Mammary epithelial cell (primary cell): ENCODE measurements at regions of chr1 and their contacts with region 1.

Region 1: GRCh38 chr1:100750005-100750885 is 30.7 kb downstream of the VCAM1 start:
- DNase-seq: no peak
- H3K4me3 ChIP-seq: no peak overlapping the region
- H3K27ac ChIP-seq: no peak overlapping the region
- H3K4me1 ChIP-seq: no peaks in the 10 kb centered on the region
- H3K27me3 ChIP-seq: no peaks in the 10 kb centered on the region
- CTCF ChIP-seq: peak in 1 of 2 donors; percentile 1

Region 2: DNA sequence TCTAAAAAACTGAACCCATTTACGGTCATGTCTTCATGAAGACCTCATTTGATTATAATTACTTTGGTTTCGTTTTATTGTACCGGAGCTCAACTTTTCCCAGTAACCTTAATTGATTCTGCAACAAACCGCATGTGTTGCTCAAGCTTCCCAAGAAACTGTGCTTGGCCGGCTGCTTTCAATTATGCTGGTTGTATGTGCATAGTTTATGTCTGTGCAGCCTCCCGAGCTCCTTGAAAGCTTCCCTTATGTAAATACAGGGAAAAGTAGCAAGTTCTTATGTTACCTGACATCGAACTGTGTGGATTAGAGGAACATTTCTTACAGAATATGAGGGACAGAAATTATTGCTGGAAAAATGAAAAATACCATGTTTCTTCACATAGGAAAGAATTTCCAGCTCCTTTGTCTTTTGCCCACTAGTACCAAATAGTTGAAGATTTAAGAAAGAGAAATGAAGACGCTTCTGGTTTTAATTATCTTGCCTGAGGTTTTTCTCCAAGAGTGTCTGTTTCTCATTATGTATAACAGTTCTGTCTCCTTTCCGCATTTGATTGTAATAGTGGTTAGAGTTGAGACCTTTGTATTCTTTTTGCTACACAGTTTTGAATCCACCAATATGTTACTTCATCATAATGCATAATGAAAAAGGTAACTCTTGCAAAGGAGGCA is 28.6 kb before region 1 on chr1:
- CTCF ChIA-PET with region 1: no interaction called
- dilution Hi-C with region 1: no loop called
- in situ Hi-C with region 1: no loop called
- intact Hi-C with region 1: loop called (anchors 2 kb)
- DNase-seq: peak; percentile 35
- H3K4me3 ChIP-seq: peak overlapping the region in 2 of 3 experiments; percentile 21 to 34
- H3K27ac ChIP-seq: no peak overlapping the region
- H3K4me1 ChIP-seq: peaks cover 7% of the 10 kb centered on the region
- H3K27me3 ChIP-seq: no peaks in the 10 kb centered on the region
- CTCF ChIP-seq: no peak